Mammary epithelial cell (primary cell): ENCODE measurements at regions of chr17 and their contacts with region 1.

Region 1: DNA sequence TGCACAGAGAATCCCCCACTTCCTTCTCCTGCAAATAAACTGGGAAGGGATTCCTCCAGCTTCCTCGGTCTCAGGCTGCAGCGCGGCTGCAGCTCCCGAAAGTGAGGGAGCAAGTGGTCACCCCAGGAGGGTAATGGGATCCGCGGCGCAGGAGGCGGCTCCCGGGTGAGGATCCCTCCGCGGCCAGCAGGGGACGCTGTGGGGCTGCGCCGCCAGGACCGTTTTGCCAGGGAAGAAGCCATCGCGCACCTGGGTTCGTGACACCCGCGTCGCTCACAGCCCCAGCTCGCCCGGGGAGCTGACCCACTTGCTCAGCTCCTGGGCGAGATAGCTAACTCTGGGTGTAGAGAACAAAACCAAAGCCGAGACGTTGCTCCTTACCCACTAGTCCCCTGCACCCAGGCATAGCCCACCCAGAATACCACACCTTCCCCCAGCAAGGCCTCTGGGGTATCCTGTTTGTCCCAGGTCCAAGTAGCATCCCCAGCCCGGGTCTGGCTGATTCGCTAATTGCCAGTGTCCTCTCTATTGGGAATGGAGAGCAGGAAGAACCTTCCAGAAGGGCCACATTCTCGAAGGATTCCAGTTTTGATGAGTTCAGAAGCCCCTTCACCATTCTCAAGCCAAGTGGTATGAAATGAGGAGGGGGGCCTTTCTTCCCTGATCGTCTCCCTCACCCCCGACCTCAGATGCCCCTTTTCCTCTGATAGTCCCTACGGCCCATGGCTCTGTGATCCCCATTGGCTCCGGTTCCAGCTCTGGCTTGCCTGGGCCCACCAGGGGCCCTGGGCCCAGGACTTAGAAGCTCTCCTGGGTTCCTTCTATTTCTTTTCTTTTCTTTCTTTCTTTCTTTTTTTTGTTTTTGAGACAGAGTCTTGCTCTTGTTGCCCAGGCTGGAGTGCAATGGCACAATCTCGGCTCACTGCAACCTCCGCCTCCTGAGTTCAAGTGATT is 14.1 kb downstream of the CYGB start:
- DNase-seq: peak; percentile 58
- H3K4me3 ChIP-seq: no peak overlapping the region
- H3K27ac ChIP-seq: no peak overlapping the region
- H3K4me1 ChIP-seq: peaks cover 27% of the 10 kb centered on the region
- H3K27me3 ChIP-seq: peaks cover 5% of the 10 kb centered on the region
- CTCF ChIP-seq: peak; percentile 89 to 100

Region 2: DNA sequence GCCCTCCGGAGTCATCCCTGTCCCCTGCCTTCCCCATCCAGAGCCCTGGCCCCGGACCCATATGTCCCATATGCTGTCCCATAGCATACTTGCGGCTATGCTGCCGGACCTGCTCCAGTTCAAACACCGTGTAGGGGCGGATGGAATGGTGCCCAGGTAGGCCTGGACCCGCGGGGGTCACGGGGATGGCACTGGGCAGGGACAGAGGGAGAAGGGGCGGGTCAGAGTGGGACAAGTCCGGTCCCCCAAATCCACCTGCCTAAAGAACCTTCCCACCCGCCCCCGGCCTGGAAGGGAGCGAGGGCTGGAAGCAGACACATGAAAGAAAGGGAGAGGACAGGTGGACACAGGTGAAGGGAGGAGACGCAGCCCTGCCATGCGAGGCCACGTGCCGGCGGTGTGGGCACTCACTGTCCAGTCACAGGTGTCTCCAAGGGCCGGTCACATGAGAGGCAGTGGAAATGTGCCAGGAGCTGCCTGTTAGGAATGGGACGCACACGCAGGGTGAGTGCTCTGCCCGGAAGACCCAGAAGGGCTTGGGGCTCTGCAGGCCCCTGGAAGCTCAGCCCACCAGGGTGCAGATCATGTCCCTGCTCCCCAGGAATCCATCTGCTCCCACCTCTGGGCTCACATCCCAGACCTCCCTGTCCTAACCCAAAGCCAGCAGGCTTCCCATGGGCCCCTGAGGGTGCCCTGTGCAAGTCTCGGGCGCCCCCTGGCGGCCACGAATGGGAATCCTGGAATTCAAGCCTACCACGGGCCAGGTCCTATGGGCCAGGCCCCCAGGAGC is 244.2 kb before region 1 on chr17:
- CTCF ChIA-PET with region 1: no interaction called
- dilution Hi-C with region 1: no loop called
- in situ Hi-C with region 1: no loop called
- intact Hi-C with region 1: no loop called
- DNase-seq: peak; percentile 51
- H3K4me3 ChIP-seq: no peak overlapping the region
- H3K27ac ChIP-seq: no peak overlapping the region
- H3K4me1 ChIP-seq: peaks cover 4% of the 10 kb centered on the region
- H3K27me3 ChIP-seq: no peaks in the 10 kb centered on the region
- CTCF ChIP-seq: peak; percentile 72 to 99

Region 3: GRCh38 chr17:76557368-76558197 is 34.2 kb after region 1 on chr17:
- CTCF ChIA-PET with region 1: no interaction called
- dilution Hi-C with region 1: no loop called
- in situ Hi-C with region 1: no loop called
- intact Hi-C with region 1: loop called (anchors 1 kb)
- DNase-seq: peak; percentile 93
- H3K4me3 ChIP-seq: peak overlapping the region; percentile 61 to 89 (median 86)
- H3K27ac ChIP-seq: peak overlapping the region; percentile 95
- H3K4me1 ChIP-seq: peaks cover 54% of the 10 kb centered on the region
- H3K27me3 ChIP-seq: no peaks in the 10 kb centered on the region
- CTCF ChIP-seq: peak; percentile 36 to 54

Region 4: DNA sequence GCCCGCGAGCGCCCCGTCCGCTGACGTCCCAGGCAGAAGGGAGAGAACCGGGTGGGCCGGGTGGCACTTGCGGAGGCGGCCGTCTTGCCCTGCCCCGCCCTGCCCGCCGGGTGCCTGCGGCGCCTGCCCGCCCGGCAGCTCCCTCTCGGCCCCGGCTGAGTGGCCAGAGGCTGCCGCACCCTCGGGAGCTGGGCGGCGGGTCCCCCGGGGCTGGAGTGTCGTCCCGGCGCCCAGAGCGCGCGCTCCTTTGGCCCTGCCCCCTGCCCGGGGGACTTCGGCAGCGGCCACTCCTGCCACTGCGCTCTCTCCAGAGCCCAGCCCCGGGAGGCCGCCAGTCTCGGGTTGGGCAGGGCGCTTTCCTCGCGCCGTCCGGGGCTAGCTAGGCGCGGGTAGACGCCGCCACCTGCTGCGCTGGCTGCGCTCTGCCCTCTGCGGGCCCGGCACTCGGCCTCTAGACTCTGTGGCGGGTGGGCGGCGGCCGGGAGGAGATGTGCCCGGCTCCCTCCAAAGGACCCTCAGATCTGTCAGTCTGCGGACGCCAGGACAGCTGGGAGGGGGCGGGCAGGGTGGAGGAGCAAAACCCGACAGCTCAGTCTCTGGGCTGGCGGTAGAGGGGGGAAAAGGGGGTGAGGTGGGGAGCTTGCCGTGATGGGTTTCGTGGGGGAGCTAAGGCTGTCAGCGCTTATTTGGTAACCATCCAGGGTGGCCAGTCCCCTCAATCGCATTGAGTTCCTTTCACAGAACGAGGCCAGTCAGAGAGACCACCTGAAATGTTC is 62.6 kb after region 1 on chr17 and contains the start of gene ST6GALNAC2:
- CTCF ChIA-PET with region 1: interaction called, 3 read pairs
- dilution Hi-C with region 1: no loop called
- in situ Hi-C with region 1: no loop called
- intact Hi-C with region 1: loop called (anchors 1 kb)
- DNase-seq: peak; percentile 89
- H3K4me3 ChIP-seq: peak within 1 kb of the TSS; percentile 86 to 93 (median 92)
- H3K27ac ChIP-seq: peak within 1 kb of the TSS; percentile 93
- H3K4me1 ChIP-seq: peaks cover 39% of the 10 kb centered on the region
- H3K27me3 ChIP-seq: no peaks in the 10 kb centered on the region
- CTCF ChIP-seq: peak; percentile 17 to 64
- total RNA-seq, gene ST6GALNAC2: 65.1 to 221 TPM

Region 5: GRCh38 chr17:76623271-76624146 is 100.1 kb after region 1 on chr17:
- CTCF ChIA-PET with region 1: no interaction called
- dilution Hi-C with region 1: no loop called
- in situ Hi-C with region 1: loop called in 1 of 2 experiments (anchors 5 kb)
- intact Hi-C with region 1: loop called (anchors 1 kb)
- DNase-seq: peak; percentile 53
- H3K4me3 ChIP-seq: no peak overlapping the region
- H3K27ac ChIP-seq: peak overlapping the region; percentile 8
- H3K4me1 ChIP-seq: peaks cover 9% of the 10 kb centered on the region
- H3K27me3 ChIP-seq: no peaks in the 10 kb centered on the region
- CTCF ChIP-seq: peak; percentile 95 to 97

Region 6: DNA sequence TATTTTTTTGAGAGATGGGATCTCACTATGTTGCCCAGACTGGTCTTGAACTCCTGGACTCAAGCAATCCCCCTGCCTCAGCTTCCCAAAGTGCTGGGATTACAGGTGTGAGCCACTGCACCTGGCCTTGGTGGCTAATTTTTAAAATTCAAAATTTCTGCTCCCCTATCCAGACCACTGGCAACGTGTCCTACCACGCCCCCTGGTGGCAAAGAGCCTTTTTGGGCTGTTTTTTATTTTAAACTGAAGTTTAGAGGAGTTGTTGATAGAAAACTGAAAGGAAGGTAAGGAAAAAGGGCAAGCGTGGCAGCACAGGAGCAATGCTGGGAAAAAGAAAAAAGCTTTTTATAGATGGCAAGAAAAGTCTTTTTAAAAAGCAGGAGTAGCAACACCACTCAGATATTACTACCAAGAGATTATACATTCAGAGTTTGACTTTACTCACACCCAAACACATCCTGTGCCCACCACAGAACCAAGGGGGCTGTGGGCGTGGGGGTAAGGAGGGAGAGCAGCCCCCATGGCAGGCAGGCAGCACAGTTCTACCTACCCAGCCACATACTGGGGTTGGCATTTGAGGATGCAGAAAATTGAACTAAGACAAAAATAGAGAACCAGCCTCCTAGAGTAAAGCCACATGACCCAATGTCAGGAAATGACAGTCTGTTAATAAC is 191.6 kb after region 1 on chr17:
- CTCF ChIA-PET with region 1: no interaction called
- dilution Hi-C with region 1: no loop called
- in situ Hi-C with region 1: no loop called
- intact Hi-C with region 1: loop called (anchors 2 kb)
- DNase-seq: no peak
- H3K4me3 ChIP-seq: no peak overlapping the region
- H3K27ac ChIP-seq: no peak overlapping the region
- H3K4me1 ChIP-seq: peaks cover 10% of the 10 kb centered on the region
- H3K27me3 ChIP-seq: no peaks in the 10 kb centered on the region
- CTCF ChIP-seq: peak; percentile 79 to 84